HCT116 (cell line): ENCODE measurements at regions of chr12 and their contacts with region 1.

Region 1: DNA sequence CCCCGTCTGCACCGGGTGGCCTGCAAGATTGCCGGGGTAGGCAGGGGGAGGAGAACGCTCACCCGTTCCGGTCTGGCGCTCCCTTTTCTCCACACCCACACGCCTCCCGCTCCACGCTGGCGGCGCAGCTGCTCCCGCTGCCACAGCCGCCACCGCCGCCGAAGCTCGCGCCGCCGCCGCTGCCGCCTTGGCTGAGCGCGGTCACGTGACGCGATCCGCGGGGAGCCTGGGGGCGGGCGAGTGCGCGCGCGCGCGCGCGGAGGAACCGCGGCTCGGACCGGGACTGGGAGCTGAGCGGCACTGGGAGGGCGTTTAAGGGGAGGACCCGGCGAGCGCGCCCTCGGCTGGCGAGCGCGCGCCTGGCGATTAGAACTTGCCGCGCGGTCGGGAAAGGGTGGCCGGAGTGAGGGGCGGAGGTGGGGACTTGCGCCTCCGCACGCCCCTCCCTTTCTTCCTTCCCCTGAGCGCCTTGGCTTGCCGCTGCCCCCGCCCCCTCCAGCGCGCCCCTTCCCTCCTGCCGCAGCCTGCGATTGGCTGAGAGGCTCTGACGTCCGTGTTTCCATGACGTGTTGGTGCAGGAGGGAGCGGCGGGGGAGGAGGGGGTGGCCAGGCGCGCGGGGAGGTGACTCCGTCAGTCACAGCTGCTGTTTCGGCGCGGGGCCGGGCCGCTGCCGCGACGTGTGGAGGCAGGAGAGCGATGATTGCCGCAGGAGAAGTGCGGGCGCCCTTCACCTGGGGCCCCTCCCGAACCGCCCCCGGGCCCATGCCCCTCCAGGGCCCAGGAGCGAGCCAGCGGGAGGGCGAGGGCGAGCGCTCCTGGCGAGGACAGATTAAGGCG is 738 bp upstream of the ATP2B1 start:
- DNase-seq: peak; percentile 97
- ATAC-seq: peak; percentile 81
- H3K4me3 ChIP-seq: peak overlapping the region; percentile 70 to 76
- H3K27ac ChIP-seq: peak overlapping the region; percentile 96
- H3K4me1 ChIP-seq: peaks cover 3 to 25% of the 10 kb centered on the region in 2 experiments; a peak in 3 of 4 replicates
- H3K27me3 ChIP-seq: no peaks in the 10 kb centered on the region
- CTCF ChIP-seq: no peak
- POLR2A ChIP-seq: no peak
- RAD21 ChIP-seq: no peak

Region 2: GRCh38 chr12:89960011-89960507 is 250.7 kb after region 1 on chr12:
- CTCF ChIA-PET with region 1: no interaction called
- POLR2A ChIA-PET with region 1: no interaction called
- RAD21 ChIA-PET with region 1: no interaction called
- intact Hi-C with region 1: loop called (anchors 10 kb)
- DNase-seq: no peak
- ATAC-seq: no peak
- H3K4me3 ChIP-seq: no peak overlapping the region
- H3K27ac ChIP-seq: no peak overlapping the region
- H3K4me1 ChIP-seq: 0 out of 4 replicates have a peak, but pooled peaks cover 0 to 4% of the 10 kb centered on the region in 2 experiments
- H3K27me3 ChIP-seq: no peaks in the 10 kb centered on the region
- CTCF ChIP-seq: no peak
- POLR2A ChIP-seq: no peak
- RAD21 ChIP-seq: no peak

Region 3: DNA sequence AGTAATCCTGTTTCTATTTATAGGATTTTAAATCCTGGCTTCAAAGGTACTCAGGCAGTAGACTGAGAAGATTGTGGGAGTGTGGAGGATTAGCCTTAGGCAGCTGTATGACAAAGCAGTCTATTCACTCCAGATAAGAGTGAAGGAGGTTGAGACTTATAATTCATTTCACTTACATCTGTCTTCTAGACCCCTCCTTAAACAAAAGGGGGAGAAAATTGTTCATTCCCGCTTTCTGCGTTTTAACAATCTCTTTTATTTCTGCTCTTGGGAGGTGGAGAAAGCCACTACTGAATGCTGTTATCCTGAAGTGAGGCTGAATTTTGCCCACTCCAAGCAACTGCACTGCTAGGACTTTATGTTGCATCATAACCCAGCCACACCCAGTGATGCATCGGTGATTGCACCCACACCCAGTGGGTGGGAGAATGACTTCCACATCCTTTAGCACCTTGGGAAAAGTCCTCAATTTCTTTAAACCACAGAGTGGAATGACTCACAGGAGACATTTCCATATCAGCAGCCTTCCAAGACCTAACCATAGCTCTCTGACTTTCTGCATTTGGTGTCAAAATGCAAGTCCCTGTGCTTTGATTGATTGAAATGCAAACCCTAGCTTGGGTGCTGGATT is 381.8 kb after region 1 on chr12:
- CTCF ChIA-PET with region 1: no interaction called
- POLR2A ChIA-PET with region 1: interaction called, 5 read pairs
- RAD21 ChIA-PET with region 1: no interaction called
- intact Hi-C with region 1: loop called (anchors 2 kb)
- DNase-seq: peak; percentile 97
- ATAC-seq: peak; percentile 91
- H3K4me3 ChIP-seq: peak overlapping the region; percentile 16 to 27
- H3K27ac ChIP-seq: peak overlapping the region; percentile 18; the same call in 1 of the 2 replicates
- H3K4me1 ChIP-seq: peaks cover 12 to 17% of the 10 kb centered on the region in 2 experiments
- H3K27me3 ChIP-seq: no peaks in the 10 kb centered on the region
- CTCF ChIP-seq: no peak
- POLR2A ChIP-seq: no peak
- RAD21 ChIP-seq: peak; percentile 33